PC-9 (cell line): ENCODE measurements at regions of chr1 and their contacts with region 1.

Region 1: DNA sequence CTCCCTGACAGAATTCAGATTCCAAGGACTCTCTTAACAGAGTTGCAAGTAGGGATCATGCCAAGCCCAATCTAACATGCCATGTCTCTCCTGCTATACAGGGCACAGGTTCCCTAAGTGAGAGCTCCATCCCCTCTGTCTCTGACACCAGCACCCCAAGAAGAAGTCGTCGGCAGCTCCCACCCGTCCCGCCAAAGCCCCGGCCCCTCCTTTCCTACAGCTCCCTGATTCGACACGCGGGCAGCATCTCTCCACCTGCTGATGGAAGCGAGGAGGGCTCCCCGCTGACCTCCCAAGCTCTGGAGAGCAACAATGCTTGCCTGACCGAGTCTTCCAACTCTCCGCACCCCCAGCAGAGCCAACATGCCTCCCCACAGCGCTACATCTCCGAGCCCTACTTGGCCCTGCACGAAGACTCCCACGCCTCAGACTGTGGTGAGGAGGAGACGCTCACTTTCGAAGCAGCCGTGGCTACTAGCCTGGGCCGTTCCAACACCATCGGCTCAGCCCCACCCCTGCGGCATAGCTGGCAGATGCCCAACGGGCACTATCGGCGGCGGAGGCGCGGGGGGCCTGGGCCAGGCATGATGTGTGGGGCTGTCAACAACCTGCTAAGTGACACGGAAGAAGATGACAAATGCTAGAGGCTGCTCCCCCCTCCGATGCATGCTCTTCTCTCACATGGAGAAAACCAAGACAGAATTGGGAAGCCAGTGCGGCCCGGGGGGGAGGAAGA is 263.2 kb downstream of the ZNF648 start:
- DNase-seq: no peak
- H3K4me3 ChIP-seq: no peak overlapping the region
- H3K27ac ChIP-seq: no peak overlapping the region
- H3K4me1 ChIP-seq: no peaks in the 10 kb centered on the region
- H3K27me3 ChIP-seq: peaks cover 64% of the 10 kb centered on the region
- CTCF ChIP-seq: no peak

Region 2: GRCh38 chr1:181630398-181630797 is 168.0 kb before region 1 on chr1:
- CTCF ChIA-PET with region 1: no interaction called
- POLR2A ChIA-PET with region 1: interaction called, 11 read pairs
- intact Hi-C with region 1: no loop called
- DNase-seq: no peak
- H3K4me3 ChIP-seq: no peak overlapping the region
- H3K27ac ChIP-seq: no peak overlapping the region
- H3K4me1 ChIP-seq: no peaks in the 10 kb centered on the region
- H3K27me3 ChIP-seq: peaks cover 9% of the 10 kb centered on the region
- CTCF ChIP-seq: no peak